HEK293T (cell line): ENCODE measurements at regions of chr1 and their contacts with region 1.

Region 1: DNA sequence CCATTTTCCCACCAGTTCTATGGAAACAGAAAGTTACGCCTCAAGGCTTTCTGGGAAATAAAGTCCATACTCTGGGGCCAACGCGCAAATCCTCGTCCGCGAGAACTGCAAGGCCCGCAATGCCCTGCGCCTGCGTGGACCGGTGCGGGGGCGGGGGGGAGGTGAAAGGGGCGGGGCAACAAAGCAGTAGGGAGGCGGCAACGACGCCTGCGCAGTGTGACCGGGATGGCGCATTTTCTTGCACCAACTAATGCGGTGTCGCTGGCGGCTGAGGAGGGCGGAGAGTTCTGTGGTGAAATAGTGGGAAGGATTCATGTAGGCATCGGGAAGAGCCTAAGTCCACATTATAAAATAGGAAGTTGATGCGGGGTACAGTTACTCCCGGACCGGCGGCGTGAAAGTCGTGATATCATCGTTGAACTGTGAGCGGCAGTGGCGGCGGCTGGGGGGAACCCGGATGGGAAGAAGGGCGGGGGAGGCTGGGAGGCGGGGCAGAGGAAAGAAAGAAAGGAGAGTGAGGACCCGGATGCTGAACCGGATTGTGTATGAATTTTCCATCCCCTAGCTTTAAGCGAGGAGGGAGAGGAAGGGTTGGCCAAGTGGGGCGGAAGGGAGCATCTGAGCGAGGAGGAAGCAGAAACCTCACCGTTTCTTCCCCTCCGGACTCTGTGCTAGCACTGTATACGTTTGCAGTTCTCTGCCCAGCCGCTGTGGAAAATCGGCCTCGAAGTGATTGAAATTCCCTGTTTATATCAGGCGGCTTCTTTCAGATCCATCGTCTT is at the start of gene GGPS1:
- DNase-seq: peak; percentile 97

Region 2: GRCh38 chr1:235261243-235261642 is 67.3 kb before region 1 on chr1:
- CTCF ChIA-PET with region 1: no interaction called
- POLR2A ChIA-PET with region 1: interaction called, 11 read pairs
- DNase-seq: no peak

Region 3: GRCh38 chr1:235298758-235299157 is 29.8 kb before region 1 on chr1:
- CTCF ChIA-PET with region 1: no interaction called
- POLR2A ChIA-PET with region 1: interaction called, 13 read pairs
- DNase-seq: no peak

Region 4: GRCh38 chr1:235339746-235340445 is 11.3 kb after region 1 on chr1:
- CTCF ChIA-PET with region 1: no interaction called
- POLR2A ChIA-PET with region 1: interaction called, 10 read pairs
- DNase-seq: no peak

Region 5: DNA sequence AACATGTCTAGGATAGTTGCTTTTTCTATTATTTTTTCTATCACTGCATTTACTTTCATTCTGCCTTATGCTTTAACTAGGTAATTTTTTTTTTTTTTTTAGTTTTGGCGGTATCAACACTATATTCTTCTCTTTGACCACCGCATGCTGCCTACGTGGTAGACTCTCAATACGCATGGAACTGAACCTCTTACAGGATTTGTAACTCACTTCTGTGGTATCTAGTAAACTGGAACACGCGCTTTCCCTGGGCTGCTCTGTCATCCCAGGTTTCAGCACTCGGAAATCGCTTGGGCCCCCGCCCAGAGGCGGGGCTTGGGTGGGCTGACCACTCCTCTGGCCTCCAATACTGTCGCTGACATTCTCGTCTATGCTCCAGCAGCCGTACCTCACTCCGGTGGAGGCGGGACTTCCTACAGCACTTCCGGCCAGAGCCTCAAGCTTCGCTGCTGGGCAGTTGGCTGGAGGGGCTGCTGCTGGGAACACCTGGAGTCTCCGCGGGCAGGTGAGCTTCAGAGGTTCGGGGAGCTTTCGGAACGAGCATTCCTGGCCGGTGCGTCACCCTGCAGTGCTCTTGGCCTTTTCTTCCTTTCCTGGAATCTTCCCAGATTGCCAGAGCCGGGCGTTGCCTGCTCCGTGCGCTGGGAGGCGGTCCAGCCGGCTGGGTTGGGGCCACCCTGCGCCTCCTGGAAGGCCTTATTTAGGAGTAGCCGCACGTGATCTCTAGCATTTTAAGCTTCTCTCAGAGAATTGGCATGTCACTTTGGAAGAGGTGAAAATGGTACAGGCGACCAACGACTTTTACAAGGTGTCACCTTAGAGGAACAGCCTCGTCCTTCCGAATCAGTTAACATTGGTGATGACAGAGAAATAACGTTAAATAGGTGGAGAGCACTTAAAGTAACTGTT is 38.7 kb after region 1 on chr1 and contains the start of gene TBCE:
- CTCF ChIA-PET with region 1: no interaction called
- POLR2A ChIA-PET with region 1: interaction called, 24 read pairs
- DNase-seq: peak; percentile 99

Region 6: GRCh38 chr1:235415008-235415904 is 86.7 kb after region 1 on chr1:
- CTCF ChIA-PET with region 1: interaction called, 10 read pairs
- POLR2A ChIA-PET with region 1: interaction called, 18 read pairs
- DNase-seq: peak; percentile 82